H1 (cell line): ENCODE measurements at regions of chr6 and their contacts with region 1.

Region 1: GRCh38 chr6:15781890-15782289 is 119.1 kb upstream of the DTNBP1 start:
- DNase-seq: no peak
- H3K4me3 ChIP-seq: no peak overlapping the region
- H3K27ac ChIP-seq: no peak overlapping the region
- H3K4me1 ChIP-seq: no peaks in the 10 kb centered on the region
- H3K27me3 ChIP-seq: peaks cover 0 to 1% (median 0%) of the 10 kb centered on the region in 4 experiments; a peak in 1 of 7 replicates
- CTCF ChIP-seq: no peak
- EP300 ChIP-seq: no peak
- POLR2A ChIP-seq: no peak
- RAD21 ChIP-seq: no peak

Region 2: DNA sequence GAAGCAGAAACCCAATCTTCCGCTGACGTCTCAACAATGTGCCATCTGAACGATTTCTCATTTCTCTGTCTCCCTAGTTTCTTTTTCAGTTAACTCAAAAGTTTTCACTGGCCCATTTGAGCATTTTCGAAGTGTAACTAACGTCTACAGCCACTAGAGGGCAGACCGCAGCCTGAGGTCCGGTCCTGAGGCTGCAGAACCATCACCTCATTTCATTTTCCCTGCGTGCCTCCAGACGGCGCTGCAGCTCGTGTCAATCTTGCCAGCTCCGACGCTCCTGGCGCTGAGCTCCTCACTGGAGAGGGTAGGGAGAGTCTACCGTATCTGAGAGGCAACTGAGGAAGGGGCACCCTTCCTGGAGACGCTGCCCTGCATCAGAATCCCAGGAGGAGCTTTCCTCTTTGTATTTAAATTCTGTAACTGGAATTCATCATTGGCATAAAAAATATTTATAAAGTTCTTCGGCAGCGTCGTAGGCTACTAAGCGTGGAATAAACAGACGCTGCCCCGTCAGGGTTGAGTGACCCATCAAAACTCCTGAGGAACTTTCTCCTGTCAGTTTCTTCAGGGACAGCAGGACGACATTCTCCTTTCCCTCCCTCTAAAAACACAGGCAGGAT is 90.5 kb before region 1 on chr6:
- CTCF ChIA-PET with region 1: interaction called, 10 read pairs
- POLR2A ChIA-PET with region 1: no interaction called
- DNase-seq: peak; percentile 75 to 79
- H3K4me3 ChIP-seq: no peak overlapping the region
- H3K27ac ChIP-seq: no peak overlapping the region
- H3K4me1 ChIP-seq: no peaks in the 10 kb centered on the region
- H3K27me3 ChIP-seq: no peaks in the 10 kb centered on the region
- CTCF ChIP-seq: peak; percentile 100
- EP300 ChIP-seq: no peak
- POLR2A ChIP-seq: no peak
- RAD21 ChIP-seq: peak; percentile 100

Region 3: DNA sequence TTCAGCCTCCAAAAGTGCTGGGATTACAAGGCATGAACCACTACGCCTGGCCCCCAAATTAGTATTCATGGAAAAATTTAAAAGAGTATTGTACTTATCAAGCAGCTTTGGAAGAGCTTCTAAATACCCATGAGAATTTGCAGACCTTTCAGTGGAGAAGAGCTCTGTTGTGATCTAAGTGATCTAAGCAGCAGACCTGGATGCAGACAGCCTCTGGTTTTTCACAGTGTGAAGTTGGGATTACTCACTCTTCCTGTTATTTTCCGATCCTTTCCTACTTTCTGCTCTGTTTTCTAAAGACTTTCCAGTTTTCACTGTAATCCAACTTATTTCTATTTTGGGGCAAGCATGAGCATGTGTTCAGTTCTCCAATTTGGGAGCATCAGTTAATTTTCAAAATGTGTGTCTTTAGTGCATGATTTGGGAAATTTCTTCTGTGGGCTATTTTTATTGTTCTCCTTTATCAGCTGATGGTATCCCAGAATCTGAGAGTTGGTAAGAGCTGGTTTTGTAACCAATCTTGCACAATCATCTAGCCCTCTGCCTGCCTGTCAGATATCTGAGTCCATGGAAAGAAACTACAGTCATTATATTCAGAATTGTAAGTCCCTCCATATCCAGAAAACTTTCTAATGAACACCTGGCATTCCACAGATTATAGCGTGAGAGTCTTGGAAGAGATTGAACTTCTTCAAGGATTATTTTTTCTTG is 88.6 kb after region 1 on chr6:
- CTCF ChIA-PET with region 1: no interaction called
- POLR2A ChIA-PET with region 1: no interaction called
- DNase-seq: no peak
- H3K4me3 ChIP-seq: no peak overlapping the region
- H3K27ac ChIP-seq: no peak overlapping the region
- H3K4me1 ChIP-seq: peaks cover 3 to 7% (median 5%) of the 10 kb centered on the region in 4 experiments; a peak in 4 of 7 replicates
- H3K27me3 ChIP-seq: no peaks in the 10 kb centered on the region
- CTCF ChIP-seq: no peak
- EP300 ChIP-seq: no peak
- POLR2A ChIP-seq: no peak
- RAD21 ChIP-seq: no peak